HEK293 (cell line): ENCODE measurements at regions of chr5 and their contacts with region 1.

Region 1: GRCh38 chr5:134586866-134587524 is 45.6 kb downstream of the SAR1B start:
- H3K4me3 ChIP-seq: no peak overlapping the region
- H3K27ac ChIP-seq: no peak overlapping the region
- H3K4me1 ChIP-seq: no peaks in the 10 kb centered on the region
- CTCF ChIP-seq: peak; percentile 68

Region 2: DNA sequence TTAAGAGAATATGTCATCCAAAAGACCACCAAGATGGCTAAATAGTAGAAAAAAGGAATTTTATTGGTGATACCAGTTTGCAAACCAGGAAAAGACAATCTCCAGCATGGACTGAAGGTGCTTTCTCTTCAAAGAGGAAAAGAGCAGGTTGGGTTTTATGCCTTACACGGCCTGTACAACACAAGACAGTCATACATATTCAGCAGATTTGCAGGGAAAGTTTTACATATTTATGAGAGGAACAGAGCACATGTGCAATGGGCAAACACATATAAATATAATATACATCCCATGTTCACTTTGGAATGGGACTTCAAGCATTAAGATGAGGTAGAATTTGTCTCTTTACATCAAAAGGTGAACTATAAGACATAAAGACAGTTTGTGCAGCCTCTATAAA is 290.8 kb before region 1 on chr5:
- CTCF ChIA-PET with region 1: interaction called, 50 read pairs
- POLR2A ChIA-PET with region 1: no interaction called
- H3K4me3 ChIP-seq: no peak overlapping the region
- H3K27ac ChIP-seq: no peak overlapping the region
- H3K4me1 ChIP-seq: no peaks in the 10 kb centered on the region
- CTCF ChIP-seq: no peak

Region 3: DNA sequence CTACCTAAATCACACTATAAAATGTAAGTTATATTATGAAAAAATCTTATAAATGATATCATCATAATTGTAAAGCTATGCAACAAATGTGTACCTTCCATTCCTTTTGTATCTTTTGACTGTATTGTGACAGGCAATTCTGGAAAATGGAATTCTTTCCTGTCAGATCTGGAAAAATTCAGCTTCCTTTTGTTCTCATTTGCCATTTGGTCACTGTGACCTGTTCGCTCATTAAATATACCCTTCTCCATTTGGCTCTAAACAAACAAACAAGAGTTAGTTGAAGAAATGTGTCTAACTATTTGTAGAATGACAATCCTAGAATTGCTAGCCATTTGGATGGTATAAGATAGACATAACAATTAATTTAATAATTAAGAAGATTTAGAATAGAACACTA is 282.7 kb before region 1 on chr5:
- CTCF ChIA-PET with region 1: interaction called, 50 read pairs
- POLR2A ChIA-PET with region 1: no interaction called
- H3K4me3 ChIP-seq: no peak overlapping the region
- H3K27ac ChIP-seq: no peak overlapping the region
- H3K4me1 ChIP-seq: no peaks in the 10 kb centered on the region
- CTCF ChIP-seq: no peak

Region 4: DNA sequence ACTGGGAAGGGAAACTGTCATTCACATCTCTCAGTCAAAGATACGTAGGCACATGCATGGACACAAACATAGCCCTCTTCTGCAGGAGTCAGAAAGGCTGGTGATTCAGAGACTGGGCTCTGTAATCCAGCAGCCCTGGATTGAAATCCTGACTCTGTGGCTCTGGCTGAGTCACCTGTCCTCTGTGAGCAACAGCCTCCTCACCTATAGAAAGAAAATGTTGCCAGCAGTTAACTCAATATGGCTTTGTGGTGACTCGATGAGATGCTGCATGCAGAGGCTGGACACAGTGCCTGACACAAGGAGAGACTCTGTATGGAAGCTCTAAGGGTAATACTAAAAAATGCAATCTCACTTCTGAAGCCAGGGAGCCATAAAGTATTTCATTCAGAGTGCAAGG is 151.4 kb before region 1 on chr5:
- CTCF ChIA-PET with region 1: no interaction called
- POLR2A ChIA-PET with region 1: no interaction called
- H3K4me3 ChIP-seq: no peak overlapping the region
- H3K27ac ChIP-seq: no peak overlapping the region
- H3K4me1 ChIP-seq: no peaks in the 10 kb centered on the region
- CTCF ChIP-seq: no peak

Region 5: GRCh38 chr5:134600600-134600999 is 13.6 kb after region 1 on chr5:
- CTCF ChIA-PET with region 1: interaction called, 14 read pairs
- POLR2A ChIA-PET with region 1: no interaction called
- H3K4me3 ChIP-seq: no peak overlapping the region
- H3K27ac ChIP-seq: no peak overlapping the region
- H3K4me1 ChIP-seq: no peaks in the 10 kb centered on the region
- CTCF ChIP-seq: no peak